Transverse colon (tissue), 4 donors: ENCODE measurements at regions of chr9 and their contacts with region 1.

Region 1: DNA sequence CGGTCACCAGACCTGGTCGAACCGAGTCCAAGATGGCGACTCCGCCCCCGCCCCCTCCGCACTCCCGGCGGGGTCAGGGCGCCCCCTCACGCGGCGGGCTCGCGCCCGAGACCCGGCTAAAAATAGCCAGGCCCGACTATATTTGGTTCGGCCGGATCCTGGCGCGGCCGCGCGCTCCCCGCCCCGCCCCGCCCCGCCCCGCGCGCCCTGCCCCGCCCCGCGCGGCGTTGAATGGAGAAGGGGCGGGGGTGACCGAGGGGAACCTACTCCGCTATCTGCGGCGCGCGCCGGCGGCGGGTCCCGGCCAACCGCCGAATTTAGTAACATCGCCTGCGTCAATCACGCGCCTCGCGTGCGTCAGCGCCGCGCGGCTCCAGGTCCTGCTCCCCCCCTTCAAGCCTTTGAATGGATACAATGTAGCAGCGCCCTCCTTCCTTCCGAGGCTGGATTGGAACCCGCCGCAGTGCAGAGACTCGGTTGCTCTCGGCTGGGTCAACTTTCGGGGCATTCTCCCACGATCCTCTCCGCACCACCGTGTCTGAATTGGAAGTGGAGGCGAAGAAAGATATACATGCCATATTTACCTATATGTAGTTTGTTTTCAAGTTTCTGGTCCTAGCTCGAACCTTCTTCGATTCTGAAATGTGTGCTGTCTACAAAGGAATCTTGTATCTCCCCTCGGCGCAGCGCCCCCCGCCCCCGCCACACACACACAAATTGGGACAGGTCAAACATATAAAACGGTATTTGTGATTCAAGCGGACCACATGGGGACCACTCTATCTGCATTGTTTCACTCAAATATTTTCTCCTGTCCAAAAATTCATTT is 1.6 kb upstream of the NR4A3 start:
- DNase-seq: peak; percentile 90
- H3K4me3 ChIP-seq: peak overlapping the region; percentile 66 to 79 (median 72)
- H3K27ac ChIP-seq: peak overlapping the region; percentile 90 to 97 (median 94)
- H3K4me1 ChIP-seq: peaks cover 18 to 51% (median 46%) of the 10 kb centered on the region in 4 donors
- H3K27me3 ChIP-seq: peaks cover 31% of the 10 kb centered on the region
- CTCF ChIP-seq: no peak
- EP300 ChIP-seq: peak; percentile 99
- POLR2A ChIP-seq: no peak

Region 2: DNA sequence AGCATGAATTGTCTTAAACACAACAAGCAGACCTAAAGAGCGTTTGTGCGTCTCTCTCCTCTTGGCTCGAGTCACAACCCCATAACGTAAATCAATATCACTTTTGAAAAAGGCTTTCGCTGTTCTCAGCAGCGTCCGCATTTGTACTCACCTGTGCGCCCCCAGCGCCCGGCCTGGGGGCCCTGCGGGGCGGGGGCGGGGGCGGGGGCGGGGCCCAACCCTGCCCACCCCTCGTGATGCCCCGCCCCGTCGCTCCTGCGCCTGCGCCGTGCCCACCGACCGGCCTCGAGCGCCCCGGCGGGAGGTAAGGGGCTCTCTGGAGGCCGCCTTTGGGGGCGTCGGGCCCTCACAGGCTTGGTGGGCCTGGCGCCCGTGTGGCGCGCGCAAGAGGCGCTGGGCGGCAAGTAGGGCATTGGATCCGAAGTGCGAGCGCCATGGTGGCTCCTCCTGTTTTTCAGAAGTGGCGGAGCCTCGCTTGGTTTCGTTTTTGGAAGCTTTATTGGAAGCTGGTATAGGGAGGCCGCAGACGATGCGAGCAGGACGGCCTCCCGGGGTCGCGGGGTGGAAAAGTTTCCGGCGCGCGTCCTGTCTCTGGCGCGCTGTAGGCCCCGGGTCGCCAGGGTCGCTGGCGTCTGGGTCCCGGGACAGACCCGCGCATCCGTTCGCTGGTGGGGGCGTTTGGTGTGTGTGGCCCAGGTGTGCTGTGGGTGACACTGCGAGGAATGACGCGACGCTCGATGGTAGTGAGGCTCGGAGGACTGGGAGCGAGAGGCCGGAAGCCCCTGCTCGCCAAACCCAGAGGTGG is 86.5 kb after region 1 on chr9 and contains the start of gene STX17:
- in situ Hi-C with region 1: no loop called
- intact Hi-C with region 1: loop called (anchors 5 kb)
- DNase-seq: peak; percentile 83
- H3K4me3 ChIP-seq: peak within 1 kb of the TSS; percentile 82 to 99 (median 89)
- H3K27ac ChIP-seq: peak within 1 kb of the TSS; percentile 96 to 100 (median 97)
- H3K4me1 ChIP-seq: peaks cover 6 to 23% (median 18%) of the 10 kb centered on the region in 4 donors
- H3K27me3 ChIP-seq: no peaks in the 10 kb centered on the region
- CTCF ChIP-seq: no peak
- EP300 ChIP-seq: no peak
- POLR2A ChIP-seq: peak; percentile 80
- total RNA-seq, gene STX17: 6.7 to 363 (median 37.1) TPM

Region 3: DNA sequence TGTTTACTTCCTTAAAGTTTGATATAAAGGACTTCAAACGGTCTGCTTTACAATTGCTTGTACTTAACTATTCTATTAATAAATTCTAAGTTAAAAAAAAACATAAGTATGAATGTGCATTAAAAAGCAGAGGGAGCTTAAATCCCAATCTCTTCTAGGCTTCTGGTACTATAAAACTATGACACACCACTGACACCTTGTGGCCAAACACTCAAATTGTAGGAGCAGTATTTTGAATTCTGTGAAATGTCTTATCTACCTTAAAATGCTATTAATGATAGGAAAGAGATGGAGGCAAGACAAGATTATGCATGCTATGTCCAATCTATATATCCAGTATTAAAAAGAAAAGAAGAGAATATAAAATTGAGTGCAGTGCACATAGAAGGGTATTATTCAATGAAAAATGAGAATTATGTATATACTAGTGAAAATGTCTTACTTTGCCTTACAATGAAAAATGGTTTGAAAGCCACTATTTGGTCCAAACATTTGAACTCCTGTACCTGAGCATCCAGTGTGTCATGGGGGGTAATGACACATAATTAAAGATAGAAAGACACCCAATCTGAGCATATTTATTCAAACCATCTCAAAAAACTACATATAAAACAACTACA is 191.1 kb after region 1 on chr9:
- in situ Hi-C with region 1: loop called in 2 of 4 experiments (anchors 25 kb)
- intact Hi-C with region 1: no loop called
- DNase-seq: no peak
- H3K4me3 ChIP-seq: no peak overlapping the region
- H3K27ac ChIP-seq: no peak overlapping the region
- H3K4me1 ChIP-seq: no peaks in the 10 kb centered on the region
- H3K27me3 ChIP-seq: no peaks in the 10 kb centered on the region
- CTCF ChIP-seq: peak; percentile 43 to 72 (median 51)
- EP300 ChIP-seq: no peak
- POLR2A ChIP-seq: no peak

Region 4: DNA sequence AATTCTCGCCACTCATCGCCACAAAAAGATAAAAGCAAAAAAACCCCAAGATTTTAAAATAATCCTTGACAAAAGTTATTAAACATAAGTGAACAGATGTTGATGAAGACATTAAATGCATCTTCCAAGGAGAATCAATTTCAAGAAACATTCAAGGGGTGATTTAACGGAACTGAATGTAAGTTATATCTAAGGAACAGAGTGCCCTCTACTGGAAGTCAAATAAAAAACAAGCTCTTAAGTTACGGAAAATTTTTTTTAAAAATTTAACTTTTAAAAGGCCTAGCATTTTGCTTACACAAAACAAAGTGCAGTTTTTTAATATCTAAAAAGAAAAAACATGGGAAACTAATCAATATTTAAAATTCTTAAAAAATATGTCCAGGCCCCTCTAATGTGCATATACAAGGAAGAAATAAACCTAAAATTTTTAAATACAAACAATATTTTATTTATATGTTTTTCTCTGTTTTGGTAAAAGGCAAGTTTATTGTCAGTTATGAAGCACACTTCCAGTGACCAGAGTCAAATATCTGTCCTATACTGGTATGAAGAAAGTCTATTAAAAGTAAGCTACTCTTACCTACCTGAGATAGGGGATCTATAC is 504.6 kb after region 1 on chr9:
- in situ Hi-C with region 1: loop called in 1 of 4 experiments (anchors 25 kb)
- intact Hi-C with region 1: no loop called
- DNase-seq: no peak
- H3K4me3 ChIP-seq: no peak overlapping the region
- H3K27ac ChIP-seq: no peak overlapping the region
- H3K4me1 ChIP-seq: peaks cover 0 to 6% (median 0%) of the 10 kb centered on the region in 4 donors
- H3K27me3 ChIP-seq: no peaks in the 10 kb centered on the region
- CTCF ChIP-seq: peak; percentile 27 to 54 (median 44)
- EP300 ChIP-seq: no peak
- POLR2A ChIP-seq: no peak